A549 (cell line): ENCODE measurements at regions of chr3 and their contacts with region 1.

Region 1: DNA sequence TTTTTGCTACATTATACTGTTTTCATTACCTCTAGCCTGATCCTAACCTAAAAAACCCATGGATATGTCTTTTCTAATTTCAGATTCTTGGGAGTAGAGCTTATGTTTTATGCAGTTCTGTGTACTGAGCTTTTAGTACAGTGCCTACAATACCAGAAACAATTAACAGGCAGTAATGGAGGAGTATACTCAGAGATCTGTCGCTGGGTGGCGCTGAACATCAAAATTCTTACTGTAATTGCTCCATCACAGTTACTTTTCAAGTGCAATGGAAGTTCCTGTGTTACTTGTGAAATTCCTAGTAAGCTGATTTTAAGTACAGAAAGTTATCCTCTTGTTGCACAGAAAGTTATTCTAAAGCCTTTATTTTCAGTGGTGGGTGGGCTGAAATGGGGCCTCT is 66.9 kb downstream of the RNF13 start:
- DNase-seq: peak; percentile 8 to 68
- ATAC-seq: peak; percentile 90 to 97
- H3K4me3 ChIP-seq: no peak overlapping the region
- H3K27ac ChIP-seq: no peak overlapping the region
- H3K4me1 ChIP-seq: no peaks in the 10 kb centered on the region
- CTCF ChIP-seq: peak; percentile 69
- EP300 ChIP-seq: no peak
- POLR2A ChIP-seq: no peak
- RAD21 ChIP-seq: peak; percentile 35 to 43; a peak in 2 of 5 replicates

Region 2: GRCh38 chr3:149867563-149867962 is 12.3 kb before region 1 on chr3:
- CTCF ChIA-PET with region 1: interaction called, 22 read pairs
- POLR2A ChIA-PET with region 1: no interaction called
- DNase-seq: no peak
- ATAC-seq: no peak
- H3K4me3 ChIP-seq: no peak overlapping the region
- H3K27ac ChIP-seq: no peak overlapping the region
- H3K4me1 ChIP-seq: no peaks in the 10 kb centered on the region
- CTCF ChIP-seq: no peak
- EP300 ChIP-seq: no peak
- POLR2A ChIP-seq: no peak
- RAD21 ChIP-seq: no peak

Region 3: DNA sequence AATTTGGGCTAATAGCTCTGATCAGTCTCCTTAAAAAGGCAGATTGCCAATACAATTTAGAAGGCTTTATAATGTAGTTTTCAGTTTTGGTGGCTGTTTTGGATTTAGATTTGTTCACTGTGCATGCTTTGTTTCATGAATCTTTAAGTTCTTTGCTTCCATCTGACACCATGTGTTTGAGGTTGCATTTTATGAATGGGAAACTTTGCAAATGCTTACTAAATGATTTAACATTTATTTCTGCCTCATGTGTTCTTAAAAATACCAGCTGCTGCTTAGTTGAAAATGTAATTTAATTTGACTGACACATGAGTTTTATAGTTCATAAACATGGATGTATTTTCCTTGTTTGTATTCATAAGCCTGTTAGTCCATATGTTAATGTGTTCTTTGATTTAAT is 11.7 kb after region 1 on chr3:
- CTCF ChIA-PET with region 1: interaction called, 16 read pairs
- POLR2A ChIA-PET with region 1: no interaction called
- DNase-seq: no peak
- ATAC-seq: no peak
- H3K4me3 ChIP-seq: no peak overlapping the region
- H3K27ac ChIP-seq: no peak overlapping the region
- H3K4me1 ChIP-seq: peaks cover 6% of the 10 kb centered on the region; the same call in 1 of the 3 replicates
- CTCF ChIP-seq: no peak
- EP300 ChIP-seq: no peak
- POLR2A ChIP-seq: no peak
- RAD21 ChIP-seq: no peak

Region 4: DNA sequence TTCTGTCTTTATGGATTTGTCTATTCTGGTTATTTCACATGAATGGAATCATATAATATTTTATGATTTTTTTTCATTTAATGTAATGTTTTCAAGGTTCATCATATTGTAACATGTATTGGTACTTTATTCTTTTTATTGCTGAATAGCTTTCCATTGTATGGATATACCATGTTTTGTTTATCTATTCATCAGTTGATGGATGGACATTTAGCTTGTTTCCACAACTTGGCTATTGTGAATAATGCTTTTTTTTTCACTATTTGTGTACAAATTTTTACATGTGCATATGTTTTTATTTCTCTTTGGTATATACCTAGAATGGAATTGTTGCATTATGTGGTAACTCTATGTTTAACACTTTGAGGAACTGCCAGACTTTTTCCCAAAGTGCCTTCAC is 26.2 kb after region 1 on chr3:
- CTCF ChIA-PET with region 1: interaction called, 12 read pairs
- POLR2A ChIA-PET with region 1: no interaction called
- DNase-seq: no peak
- ATAC-seq: no peak
- H3K4me3 ChIP-seq: no peak overlapping the region
- H3K27ac ChIP-seq: no peak overlapping the region
- H3K4me1 ChIP-seq: no peaks in the 10 kb centered on the region
- CTCF ChIP-seq: no peak
- EP300 ChIP-seq: no peak
- POLR2A ChIP-seq: no peak
- RAD21 ChIP-seq: no peak

Region 5: DNA sequence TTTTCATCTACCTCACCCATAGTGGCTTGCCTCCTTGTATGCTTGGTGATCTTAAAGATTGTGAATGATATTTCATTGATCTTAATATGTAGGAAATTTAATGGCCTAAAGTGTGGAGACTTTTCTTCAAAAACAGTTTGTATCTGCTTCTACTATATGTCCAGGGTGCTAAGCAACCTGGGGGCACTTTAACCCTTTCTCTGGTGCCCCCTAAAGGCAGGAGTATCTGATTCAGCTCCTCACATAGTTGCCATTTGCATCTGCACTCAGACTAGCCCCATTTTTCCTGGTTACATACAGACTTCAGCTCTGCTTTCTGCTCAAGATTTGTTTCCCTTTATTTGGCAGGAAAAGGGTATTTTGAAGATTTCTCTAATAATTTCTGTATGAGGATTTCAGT is 96.0 kb after region 1 on chr3:
- CTCF ChIA-PET with region 1: no interaction called
- POLR2A ChIA-PET with region 1: no interaction called
- DNase-seq: no peak
- ATAC-seq: no peak
- H3K4me3 ChIP-seq: no peak overlapping the region
- H3K27ac ChIP-seq: no peak overlapping the region
- H3K4me1 ChIP-seq: peaks cover 6% of the 10 kb centered on the region; the same call in 1 of the 3 replicates
- CTCF ChIP-seq: no peak
- EP300 ChIP-seq: no peak
- POLR2A ChIP-seq: no peak
- RAD21 ChIP-seq: 0 out of 5 replicates have a peak, but pooled peaks of 1 of the 2 experiments have one; percentile 8